Calu3 (cell line): ENCODE measurements at regions of chr11 and their contacts with region 1.

Region 1: GRCh38 chr11:21988477-21988876 is 204.4 kb upstream of the ANO5 start:
- DNase-seq: no peak
- H3K4me3 Mint-ChIP-seq: no peak overlapping the region
- H3K27ac Mint-ChIP-seq: no peak overlapping the region
- H3K4me1 Mint-ChIP-seq: no peaks in the 10 kb centered on the region
- H3K27me3 Mint-ChIP-seq: no peaks in the 10 kb centered on the region
- CTCF ChIP-seq: no peak

Region 2: GRCh38 chr11:21861314-21861713 is 127.2 kb before region 1 on chr11:
- CTCF ChIA-PET with region 1: no interaction called
- intact Hi-C with region 1: no loop called
- DNase-seq: no peak
- H3K4me3 Mint-ChIP-seq: no peak overlapping the region
- H3K27ac Mint-ChIP-seq: no peak overlapping the region
- H3K4me1 Mint-ChIP-seq: no peaks in the 10 kb centered on the region
- H3K27me3 Mint-ChIP-seq: no peaks in the 10 kb centered on the region
- CTCF ChIP-seq: no peak

Region 3: GRCh38 chr11:21933095-21933494 is 55.4 kb before region 1 on chr11:
- CTCF ChIA-PET with region 1: interaction called, 3 read pairs
- intact Hi-C with region 1: loop called (anchors 1 kb)
- DNase-seq: no peak
- H3K4me3 Mint-ChIP-seq: no peak overlapping the region
- H3K27ac Mint-ChIP-seq: no peak overlapping the region
- H3K4me1 Mint-ChIP-seq: no peaks in the 10 kb centered on the region
- H3K27me3 Mint-ChIP-seq: no peaks in the 10 kb centered on the region
- CTCF ChIP-seq: peak; percentile 53